MCF 10A (cell line): ENCODE measurements at regions of chr10 and their contacts with region 1.

Region 1: GRCh38 chr10:63268798-63269503 is 135.8 kb downstream of the NRBF2 start:
- DNase-seq: peak; percentile 97
- H3K4me3 Mint-ChIP-seq: peak overlapping the region; percentile 86
- H3K27ac Mint-ChIP-seq: peak overlapping the region; percentile 96
- H3K4me1 Mint-ChIP-seq: peaks cover 5% of the 10 kb centered on the region
- H3K27me3 Mint-ChIP-seq: no peaks in the 10 kb centered on the region
- CTCF ChIP-seq: peak; percentile 21

Region 2: DNA sequence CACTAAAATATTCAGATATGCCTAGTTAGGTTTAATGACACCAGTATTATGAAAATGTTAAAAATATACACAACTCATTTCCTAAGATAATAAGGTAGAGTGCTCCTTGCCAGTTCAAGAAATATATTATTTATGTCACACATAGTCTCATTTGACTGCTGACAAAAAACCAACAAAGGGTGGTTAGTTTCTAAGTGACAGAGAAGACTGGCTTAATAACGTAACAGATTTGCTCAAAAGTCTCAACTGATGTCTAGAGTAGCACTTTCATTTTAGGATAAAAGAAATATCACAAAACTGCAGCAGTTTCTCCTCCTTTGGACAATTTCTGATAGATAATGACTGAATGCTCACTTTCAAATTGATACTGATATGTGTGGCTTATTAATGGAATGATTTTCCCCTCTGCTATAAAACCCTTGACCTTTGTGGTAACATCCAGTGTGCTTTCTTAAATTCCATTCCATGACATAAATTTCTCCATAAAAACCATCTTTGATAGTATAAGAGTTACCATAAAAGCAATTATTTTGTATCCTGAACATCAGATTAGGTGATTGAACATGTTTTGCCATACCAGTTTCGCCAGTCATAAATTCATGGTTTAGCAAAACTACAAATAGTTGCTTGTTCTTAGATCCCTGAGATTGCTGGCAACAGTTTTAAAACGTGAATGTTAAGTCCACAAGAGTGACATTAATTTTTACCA is 41.6 kb before region 1 on chr10:
- CTCF ChIA-PET with region 1: interaction called, 4 read pairs
- POLR2A ChIA-PET with region 1: interaction called, 12 read pairs
- intact Hi-C with region 1: no loop called
- DNase-seq: no peak
- H3K4me3 Mint-ChIP-seq: no peak overlapping the region
- H3K27ac Mint-ChIP-seq: peak overlapping the region; percentile 44
- H3K4me1 Mint-ChIP-seq: no peaks in the 10 kb centered on the region
- H3K27me3 Mint-ChIP-seq: no peaks in the 10 kb centered on the region
- CTCF ChIP-seq: no peak

Region 3: DNA sequence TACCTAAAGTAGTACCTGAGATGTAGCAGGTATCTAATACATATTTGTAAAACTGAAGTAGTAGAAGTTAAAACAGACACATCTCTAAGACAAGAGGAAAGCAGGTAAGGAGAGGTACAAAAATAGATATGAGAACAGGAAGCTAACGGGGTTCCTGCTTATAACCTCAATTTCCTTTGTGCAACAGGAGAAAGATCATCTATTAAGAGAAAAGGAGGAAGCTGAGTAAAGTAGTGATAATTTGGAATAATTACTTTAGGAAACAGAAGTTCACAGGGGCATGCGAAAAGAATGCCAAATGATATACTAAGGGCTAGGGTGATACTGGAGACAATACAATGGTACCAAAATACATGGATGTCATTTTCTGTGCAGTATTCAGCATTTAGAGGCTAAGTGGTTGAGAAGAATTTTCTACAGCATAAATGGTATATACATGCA is 27.1 kb before region 1 on chr10:
- CTCF ChIA-PET with region 1: no interaction called
- POLR2A ChIA-PET with region 1: interaction called, 61 read pairs
- intact Hi-C with region 1: loop called (anchors 2 kb)
- DNase-seq: no peak
- H3K4me3 Mint-ChIP-seq: no peak overlapping the region
- H3K27ac Mint-ChIP-seq: no peak overlapping the region
- H3K4me1 Mint-ChIP-seq: peaks cover 50% of the 10 kb centered on the region
- H3K27me3 Mint-ChIP-seq: no peaks in the 10 kb centered on the region
- CTCF ChIP-seq: no peak

Region 4: GRCh38 chr10:63283093-63283492 is 14.1 kb after region 1 on chr10:
- CTCF ChIA-PET with region 1: interaction called, 4 read pairs
- POLR2A ChIA-PET with region 1: interaction called, 17 read pairs
- intact Hi-C with region 1: no loop called
- DNase-seq: no peak
- H3K4me3 Mint-ChIP-seq: no peak overlapping the region
- H3K27ac Mint-ChIP-seq: no peak overlapping the region
- H3K4me1 Mint-ChIP-seq: peaks cover 6% of the 10 kb centered on the region
- H3K27me3 Mint-ChIP-seq: no peaks in the 10 kb centered on the region
- CTCF ChIP-seq: no peak

Region 5: GRCh38 chr10:63297941-63298340 is 29.0 kb after region 1 on chr10:
- CTCF ChIA-PET with region 1: no interaction called
- POLR2A ChIA-PET with region 1: no interaction called
- intact Hi-C with region 1: no loop called
- DNase-seq: no peak
- H3K4me3 Mint-ChIP-seq: no peak overlapping the region
- H3K27ac Mint-ChIP-seq: no peak overlapping the region
- H3K4me1 Mint-ChIP-seq: peaks cover 11% of the 10 kb centered on the region
- H3K27me3 Mint-ChIP-seq: no peaks in the 10 kb centered on the region
- CTCF ChIP-seq: no peak

Region 6: DNA sequence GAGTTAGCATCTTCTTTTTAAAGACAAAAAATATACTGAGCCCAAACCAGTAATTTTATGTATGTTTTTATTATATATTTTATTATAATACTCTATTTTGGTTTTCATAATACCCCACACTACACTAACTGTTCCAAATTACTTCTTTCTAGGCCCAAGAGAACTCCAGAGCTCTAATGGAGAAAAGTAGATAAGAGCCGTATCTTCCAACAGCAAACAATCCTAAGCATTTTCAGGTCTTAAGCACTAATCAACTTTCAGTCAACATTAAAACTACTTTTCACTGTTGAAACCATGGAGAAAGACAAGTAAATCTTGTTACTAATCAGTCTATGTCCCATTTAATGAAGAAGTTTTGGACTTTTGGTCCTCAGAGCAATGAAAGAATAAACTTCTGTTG is 141.7 kb after region 1 on chr10:
- CTCF ChIA-PET with region 1: no interaction called
- POLR2A ChIA-PET with region 1: no interaction called
- intact Hi-C with region 1: no loop called
- DNase-seq: no peak
- H3K4me3 Mint-ChIP-seq: no peak overlapping the region
- H3K27ac Mint-ChIP-seq: no peak overlapping the region
- H3K4me1 Mint-ChIP-seq: peaks cover 16% of the 10 kb centered on the region
- H3K27me3 Mint-ChIP-seq: no peaks in the 10 kb centered on the region
- CTCF ChIP-seq: no peak

Region 7: DNA sequence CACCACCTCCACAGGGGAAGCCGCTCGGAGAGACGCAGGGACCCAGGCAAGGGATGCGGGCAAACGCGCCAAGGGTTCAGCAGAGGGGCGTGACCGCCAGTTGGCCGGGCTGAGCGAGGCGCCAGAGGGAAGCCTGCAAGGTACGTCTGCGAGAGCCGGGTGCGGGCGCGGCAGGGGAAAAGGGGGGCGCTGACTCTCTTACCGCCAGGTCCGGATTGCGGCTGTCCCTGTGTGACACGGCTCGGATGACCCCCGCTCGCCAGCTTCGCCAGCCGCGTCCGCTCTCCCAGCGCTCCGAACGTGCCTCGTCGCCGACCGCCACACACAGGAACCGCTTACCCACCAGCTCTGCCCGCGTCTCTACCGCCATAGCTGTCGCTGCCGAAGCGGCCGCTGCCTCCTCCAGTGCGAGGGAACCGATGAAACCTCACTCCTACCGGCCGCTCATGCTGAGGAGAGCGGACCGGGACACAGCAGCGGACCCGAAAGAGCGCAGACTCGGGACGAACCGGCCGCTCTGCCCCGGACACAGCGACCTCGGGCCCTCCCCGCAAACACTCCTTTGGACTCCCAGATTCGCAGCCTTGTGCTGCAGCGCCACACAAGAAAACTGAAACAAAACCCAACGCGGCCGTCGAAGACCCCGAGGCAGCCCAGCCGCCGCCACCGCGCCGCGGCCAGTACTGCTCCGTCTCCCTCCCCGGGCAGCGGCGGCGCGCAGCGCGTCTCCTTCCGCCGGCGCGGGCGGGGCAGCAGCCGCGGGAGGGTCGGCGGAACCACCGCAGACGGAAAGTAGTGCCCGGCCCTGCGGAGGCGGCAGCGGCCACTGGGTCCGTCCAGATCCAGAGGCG is 196.6 kb after region 1 on chr10 and contains the start of gene JMJD1C:
- CTCF ChIA-PET with region 1: interaction called, 14 read pairs
- POLR2A ChIA-PET with region 1: interaction called, 140 read pairs
- intact Hi-C with region 1: loop called (anchors 1 kb)
- DNase-seq: peak; percentile 75
- H3K4me3 Mint-ChIP-seq: peak within 1 kb of the TSS; percentile 97
- H3K27ac Mint-ChIP-seq: peak within 1 kb of the TSS; percentile 93
- H3K4me1 Mint-ChIP-seq: peaks cover 19% of the 10 kb centered on the region
- H3K27me3 Mint-ChIP-seq: no peaks in the 10 kb centered on the region
- CTCF ChIP-seq: no peak
- total RNA-seq, gene JMJD1C: 91.9 and 101 TPM in 2 replicates

Region 8: GRCh38 chr10:63521416-63522276 is 252.7 kb after region 1 on chr10:
- CTCF ChIA-PET with region 1: interaction called, 4 read pairs
- POLR2A ChIA-PET with region 1: interaction called, 202 read pairs
- intact Hi-C with region 1: loop called (anchors 1 kb)
- DNase-seq: peak; percentile 65
- H3K4me3 Mint-ChIP-seq: peak overlapping the region; percentile 86
- H3K27ac Mint-ChIP-seq: peak overlapping the region; percentile 83
- H3K4me1 Mint-ChIP-seq: peaks cover 46% of the 10 kb centered on the region
- H3K27me3 Mint-ChIP-seq: no peaks in the 10 kb centered on the region
- CTCF ChIP-seq: no peak

Region 9: DNA sequence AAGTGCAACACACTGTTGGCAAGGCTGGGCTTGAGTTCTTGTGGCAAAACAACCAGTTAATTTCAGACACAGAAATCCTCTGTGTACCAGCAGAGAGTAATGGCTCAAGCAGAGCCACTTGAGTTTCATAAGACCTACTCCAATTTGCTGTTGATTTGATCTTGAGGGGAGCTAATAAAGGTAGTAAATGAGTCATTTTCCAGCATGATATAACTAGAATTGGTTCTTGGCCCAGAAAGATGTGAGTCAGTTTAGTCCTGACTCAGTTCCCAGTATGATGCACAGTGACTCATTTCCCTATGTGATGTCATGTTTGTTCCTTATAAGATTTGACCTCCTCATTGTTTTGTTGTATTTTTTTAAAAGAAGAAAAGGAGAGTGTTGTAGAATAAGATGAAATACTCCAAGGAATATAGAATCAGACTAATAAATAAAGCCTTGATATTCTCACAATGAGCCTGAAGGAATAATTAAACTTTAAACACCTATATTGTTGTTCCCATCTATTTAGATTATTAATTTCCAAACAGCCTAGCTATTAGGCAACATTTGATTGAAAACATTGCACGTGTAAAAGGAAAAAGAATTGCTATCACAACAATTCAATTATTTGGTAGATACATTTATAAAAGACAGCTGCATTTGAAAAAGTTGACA is 438.4 kb after region 1 on chr10:
- CTCF ChIA-PET with region 1: no interaction called
- POLR2A ChIA-PET with region 1: interaction called, 8 read pairs
- intact Hi-C with region 1: loop called (anchors 5 kb)
- DNase-seq: peak; percentile 98
- H3K4me3 Mint-ChIP-seq: no peak overlapping the region
- H3K27ac Mint-ChIP-seq: peak overlapping the region; percentile 61
- H3K4me1 Mint-ChIP-seq: peaks cover 42% of the 10 kb centered on the region
- H3K27me3 Mint-ChIP-seq: no peaks in the 10 kb centered on the region
- CTCF ChIP-seq: no peak

Region 10: GRCh38 chr10:63772491-63772890 is 503.5 kb after region 1 on chr10:
- CTCF ChIA-PET with region 1: no interaction called
- POLR2A ChIA-PET with region 1: no interaction called
- intact Hi-C with region 1: no loop called
- DNase-seq: no peak
- H3K4me3 Mint-ChIP-seq: no peak overlapping the region
- H3K27ac Mint-ChIP-seq: no peak overlapping the region
- H3K4me1 Mint-ChIP-seq: peaks cover 4% of the 10 kb centered on the region
- H3K27me3 Mint-ChIP-seq: peaks cover 30% of the 10 kb centered on the region
- CTCF ChIP-seq: no peak